ENCODE measurements at regions of chr15 and their contacts with region 1.

Region 1: DNA sequence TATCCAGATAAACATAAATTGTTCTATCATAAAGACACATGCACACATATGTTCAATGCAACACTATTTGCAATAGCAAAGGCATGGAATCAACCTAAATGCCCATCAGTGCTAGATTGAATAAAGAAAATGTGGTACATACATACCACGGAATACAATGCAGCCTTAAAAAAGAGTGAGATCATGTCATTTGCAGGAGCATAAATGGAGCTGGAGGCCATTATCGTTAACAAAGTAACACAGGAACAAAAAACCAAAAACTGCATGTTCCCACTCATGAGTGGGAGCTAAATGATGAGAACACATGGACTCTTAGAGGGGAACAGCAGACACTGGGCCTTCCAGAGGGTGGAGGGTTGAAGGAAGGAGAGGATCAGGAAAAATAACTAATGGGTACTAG is 79.2 kb downstream of the SH3GL3 start:
- DNase-seq: no peak
- H3K4me3 ChIP-seq: no peak overlapping the region
- H3K27ac ChIP-seq: no peak overlapping the region
- H3K4me1 ChIP-seq: no peaks in the 10 kb centered on the region
- H3K27me3 ChIP-seq: peaks cover 5% of the 10 kb centered on the region
- CTCF ChIP-seq: no peak

Region 2: DNA sequence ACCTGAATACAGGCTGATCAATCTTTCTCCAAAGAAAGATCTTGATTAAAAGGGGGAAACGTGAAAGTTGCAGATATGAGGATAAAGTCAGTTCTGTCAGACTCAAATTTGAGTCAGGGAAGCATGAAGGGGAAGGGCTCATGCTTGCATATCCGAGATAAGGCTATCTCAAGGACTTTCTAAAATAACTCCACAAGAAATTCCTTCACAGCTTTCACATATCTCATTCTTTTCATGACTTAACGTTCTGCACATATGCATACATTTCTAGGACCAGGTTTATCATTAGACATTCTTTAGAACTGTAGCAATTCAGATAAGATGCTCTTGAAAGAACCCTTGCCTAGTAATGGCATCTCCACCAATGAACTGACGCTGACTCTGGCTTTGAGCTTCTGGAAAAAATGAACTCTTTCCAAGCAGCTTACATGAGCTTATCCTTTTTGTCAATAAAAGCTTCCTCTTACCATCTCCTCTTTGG is 63.3 kb before region 1 on chr15:
- CTCF ChIA-PET with region 1: no interaction called
- dilution Hi-C with region 1: no loop called
- in situ Hi-C with region 1: no loop called
- intact Hi-C with region 1: loop called (anchors 10 kb)
- DNase-seq: no peak
- H3K4me3 ChIP-seq: no peak overlapping the region
- H3K27ac ChIP-seq: no peak overlapping the region
- H3K4me1 ChIP-seq: no peaks in the 10 kb centered on the region
- H3K27me3 ChIP-seq: no peaks in the 10 kb centered on the region
- CTCF ChIP-seq: no peak